AG04449 (cell line): ENCODE measurements at regions of chr7 and their contacts with region 1.

Region 1: DNA sequence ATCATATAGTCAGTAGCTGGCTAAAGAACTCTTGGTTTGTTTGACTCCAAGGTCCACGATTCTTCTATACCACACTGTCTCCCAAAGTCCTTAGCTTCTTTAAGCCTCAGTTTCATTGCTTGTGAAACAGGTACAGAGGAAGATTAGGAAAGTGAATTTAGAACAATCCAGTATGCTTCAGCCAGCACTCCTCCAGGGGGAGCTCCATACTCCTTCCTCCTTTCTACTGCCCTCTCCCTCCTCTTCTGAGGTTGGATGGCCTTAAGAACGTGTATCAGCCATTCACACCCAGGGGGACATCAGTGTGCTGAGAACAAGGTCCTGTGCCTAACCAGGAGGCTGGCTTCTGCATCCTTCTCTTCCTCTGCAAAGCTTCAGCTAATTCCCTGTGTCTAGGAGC is 54.8 kb upstream of the CALD1 start:
- DNase-seq: no peak
- H3K4me3 ChIP-seq: no peak overlapping the region
- CTCF ChIP-seq: peak; percentile 69

Region 2: DNA sequence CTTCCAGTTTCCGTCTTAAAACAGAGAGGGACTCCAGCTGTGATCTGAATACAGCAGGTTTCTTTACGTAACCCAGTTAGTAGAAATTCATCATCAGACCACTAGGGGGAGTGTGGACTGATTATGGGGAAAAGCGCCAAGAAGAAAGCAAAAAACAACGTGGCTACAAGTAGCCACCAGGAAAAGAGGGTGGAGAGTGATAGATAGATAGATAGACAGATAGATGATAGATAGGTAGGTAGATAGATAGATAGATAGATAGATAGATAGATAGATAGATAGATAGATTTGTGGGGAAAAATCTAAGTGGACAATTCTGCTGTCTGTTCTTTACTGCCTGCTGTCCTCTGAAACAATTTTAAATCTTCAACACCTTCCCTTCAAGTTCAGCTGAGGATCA is 209.9 kb before region 1 on chr7:
- CTCF ChIA-PET with region 1: no interaction called
- POLR2A ChIA-PET with region 1: no interaction called
- DNase-seq: peak; percentile 31
- H3K4me3 ChIP-seq: no peak overlapping the region
- CTCF ChIP-seq: peak; percentile 69

Region 3: DNA sequence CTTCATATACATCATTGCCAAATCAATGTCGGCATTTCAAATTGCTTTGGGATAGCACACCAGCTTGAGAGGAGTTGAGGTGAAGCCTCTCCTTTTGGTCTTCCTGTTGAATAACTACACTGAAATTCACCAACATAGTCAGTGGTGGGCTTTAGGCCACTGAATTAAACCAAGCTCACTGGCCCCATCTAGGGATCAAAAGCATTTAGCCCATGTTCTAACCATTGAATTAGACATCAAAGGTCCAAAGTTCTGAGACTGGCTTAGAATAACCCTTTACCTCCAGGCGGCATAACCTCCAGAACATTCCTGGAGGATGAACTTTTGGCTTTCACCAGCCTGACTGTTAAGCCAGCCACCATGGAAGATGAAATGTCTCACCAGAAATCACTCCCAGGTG is 23.3 kb before region 1 on chr7:
- CTCF ChIA-PET with region 1: interaction called, 16 read pairs
- POLR2A ChIA-PET with region 1: no interaction called
- DNase-seq: no peak
- H3K4me3 ChIP-seq: no peak overlapping the region
- CTCF ChIP-seq: no peak

Region 4: GRCh38 chr7:134737566-134738345 is 13.2 kb after region 1 on chr7:
- CTCF ChIA-PET with region 1: interaction called, 96 read pairs
- POLR2A ChIA-PET with region 1: no interaction called
- DNase-seq: peak; percentile 90
- H3K4me3 ChIP-seq: no peak overlapping the region
- CTCF ChIP-seq: no peak

Region 5: GRCh38 chr7:134750083-134751062 is 25.8 kb after region 1 on chr7:
- CTCF ChIA-PET with region 1: interaction called, 44 read pairs
- POLR2A ChIA-PET with region 1: no interaction called
- DNase-seq: no peak
- H3K4me3 ChIP-seq: no peak overlapping the region
- CTCF ChIP-seq: peak; percentile 70

Region 6: DNA sequence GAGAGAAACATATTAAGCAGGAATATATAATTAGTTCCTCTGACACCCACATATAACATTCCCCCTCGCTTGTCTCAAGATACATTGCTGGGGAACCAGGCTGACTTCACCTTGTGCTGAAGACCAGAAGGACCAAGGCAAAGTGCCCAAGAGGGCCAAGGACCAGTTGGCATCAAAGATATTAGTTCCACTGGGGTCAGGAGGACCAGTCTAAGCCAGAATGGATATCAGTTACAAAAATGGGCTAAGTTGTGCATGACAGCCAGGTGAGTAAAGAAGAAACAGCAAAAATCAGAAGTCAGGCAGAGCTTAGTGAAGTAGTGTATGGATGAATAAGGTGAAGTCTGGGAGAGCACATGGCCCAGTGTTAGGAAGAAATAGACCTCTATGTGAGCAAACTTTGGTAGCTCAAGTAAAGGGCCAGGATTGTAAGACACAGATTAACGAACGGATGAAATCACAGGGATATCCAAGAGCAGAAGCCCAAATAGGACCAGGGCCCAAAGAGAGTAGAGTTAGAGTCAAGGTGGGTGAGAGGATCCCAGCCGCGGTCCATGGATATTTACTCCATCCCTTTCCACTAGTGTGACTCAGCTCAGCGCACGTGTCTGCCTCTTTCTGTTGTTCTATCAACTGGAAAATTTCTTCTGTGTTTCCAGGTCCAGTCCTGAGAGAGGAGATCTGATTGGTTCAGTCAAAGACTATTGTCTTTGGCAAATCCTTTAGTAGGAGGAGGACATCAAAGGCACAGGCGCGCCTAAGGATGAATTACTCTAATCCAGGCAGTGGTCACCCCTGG is 59.8 kb after region 1 on chr7:
- CTCF ChIA-PET with region 1: interaction called, 14 read pairs
- POLR2A ChIA-PET with region 1: interaction called, 3 read pairs
- DNase-seq: no peak
- H3K4me3 ChIP-seq: peak overlapping the region; percentile 83
- CTCF ChIP-seq: no peak